ENCODE measurements at regions of chrX and their contacts with region 1.

Region 1: DNA sequence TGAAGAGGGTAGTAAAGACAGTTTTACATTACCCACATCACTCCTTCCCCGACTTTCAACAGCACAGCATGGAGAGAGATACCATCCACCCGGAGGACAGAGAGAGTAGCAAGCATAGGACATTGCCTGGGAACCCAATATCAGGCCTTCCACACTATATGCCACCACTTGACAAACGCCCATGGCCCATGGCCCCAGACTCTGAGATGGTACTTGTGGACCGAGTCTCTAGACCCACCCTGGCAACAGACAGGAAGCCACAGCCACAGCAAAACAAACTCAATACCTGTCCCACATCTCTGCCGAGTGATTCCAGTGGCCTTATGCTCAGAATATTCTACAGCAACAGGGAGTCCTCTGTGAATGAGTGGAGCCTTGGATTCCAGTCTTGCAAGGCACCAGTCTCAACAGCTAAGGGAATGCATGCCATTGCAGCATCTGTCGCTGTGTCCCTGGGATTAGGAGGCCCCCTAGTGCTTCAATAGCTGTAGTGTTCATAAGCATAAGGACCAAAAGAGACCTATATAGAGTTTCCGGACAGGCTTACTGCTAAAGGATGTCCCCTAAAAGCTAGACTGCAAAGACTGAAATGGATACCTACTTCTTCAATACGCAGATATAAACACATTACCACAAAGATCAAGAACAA is 14.7 kb upstream of the CT55 start:
- DNase-seq: peak; percentile 67
- ATAC-seq: peak; percentile 84
- H3K4me3 ChIP-seq: no peak overlapping the region
- H3K27ac ChIP-seq: no peak overlapping the region
- H3K4me1 ChIP-seq: no peaks in the 10 kb centered on the region
- H3K27me3 ChIP-seq: peaks cover 66% of the 10 kb centered on the region
- CTCF ChIP-seq: peak; percentile 63

Region 2: GRCh38 chrX:135060697-135061096 is 125.2 kb before region 1 on chrX:
- CTCF ChIA-PET with region 1: no interaction called
- POLR2A ChIA-PET with region 1: no interaction called
- intact Hi-C with region 1: loop called (anchors 5 kb)
- DNase-seq: no peak
- ATAC-seq: no peak
- H3K4me3 ChIP-seq: no peak overlapping the region
- H3K27ac ChIP-seq: no peak overlapping the region
- H3K4me1 ChIP-seq: no peaks in the 10 kb centered on the region
- H3K27me3 ChIP-seq: no peaks in the 10 kb centered on the region
- CTCF ChIP-seq: no peak